ENCODE measurements at regions of chr1 and their contacts with region 1.

Region 1: GRCh38 chr1:161921990-161922389 is 101.7 kb downstream of the OLFML2B start:
- DNase-seq: no peak
- H3K4me3 ChIP-seq: no peak overlapping the region
- H3K27ac ChIP-seq: no peak overlapping the region
- H3K4me1 ChIP-seq: no peaks in the 10 kb centered on the region
- H3K27me3 ChIP-seq: no peaks in the 10 kb centered on the region
- CTCF ChIP-seq: no peak
- POLR2A ChIP-seq: no peak

Region 2: DNA sequence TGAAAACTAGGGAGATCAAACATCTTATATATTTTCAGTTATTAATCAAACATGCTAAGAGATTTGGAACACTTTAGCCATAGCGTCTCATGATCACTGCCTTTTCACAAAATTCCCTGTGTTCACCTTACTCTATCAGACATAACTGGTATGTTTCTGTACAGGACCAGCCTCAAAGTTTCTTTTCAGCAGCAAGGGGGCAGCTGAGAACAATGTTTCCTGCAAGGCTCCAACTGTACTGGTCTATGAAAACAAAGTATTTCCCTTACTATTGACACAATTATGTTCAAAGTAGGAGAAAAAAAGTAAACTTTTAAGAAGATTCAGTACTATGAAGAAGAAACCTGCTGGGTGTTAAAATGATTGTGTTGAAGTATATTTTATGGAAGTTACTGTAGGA is 57.4 kb before region 1 on chr1:
- intact Hi-C with region 1: no loop called
- DNase-seq: no peak
- H3K4me3 ChIP-seq: no peak overlapping the region
- H3K27ac ChIP-seq: no peak overlapping the region
- H3K4me1 ChIP-seq: no peaks in the 10 kb centered on the region
- H3K27me3 ChIP-seq: no peaks in the 10 kb centered on the region
- CTCF ChIP-seq: peak in 1 of 4 experiments; percentile 26
- POLR2A ChIP-seq: no peak

Region 3: GRCh38 chr1:161989108-161989507 is 67.1 kb after region 1 on chr1:
- intact Hi-C with region 1: loop called (anchors 2 kb)
- DNase-seq: no peak
- H3K4me3 ChIP-seq: no peak overlapping the region
- H3K27ac ChIP-seq: no peak overlapping the region
- H3K4me1 ChIP-seq: no peaks in the 10 kb centered on the region
- H3K27me3 ChIP-seq: no peaks in the 10 kb centered on the region
- CTCF ChIP-seq: no peak
- POLR2A ChIP-seq: no peak

Region 4: DNA sequence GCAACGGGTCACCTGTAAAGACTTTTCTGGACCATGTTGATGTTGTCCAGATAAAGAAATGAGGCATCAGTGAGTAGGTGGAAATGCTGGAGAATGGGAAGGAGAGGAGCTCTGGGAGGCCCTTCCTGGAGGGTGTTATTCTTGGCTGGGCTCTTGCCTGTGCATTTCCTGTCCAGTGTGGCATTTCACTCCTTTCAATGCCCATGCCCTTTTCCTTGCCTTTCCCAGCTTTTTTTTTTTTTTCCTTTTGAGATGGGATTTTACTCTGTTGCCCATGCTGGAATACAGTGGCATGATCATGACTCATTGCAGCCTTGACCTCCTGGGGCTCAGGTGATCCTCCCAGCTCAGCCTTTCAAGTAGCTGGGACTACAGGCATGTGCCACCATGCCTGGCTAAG is 159.3 kb after region 1 on chr1:
- intact Hi-C with region 1: no loop called
- DNase-seq: no peak
- H3K4me3 ChIP-seq: no peak overlapping the region
- H3K27ac ChIP-seq: no peak overlapping the region
- H3K4me1 ChIP-seq: no peaks in the 10 kb centered on the region
- H3K27me3 ChIP-seq: no peaks in the 10 kb centered on the region
- CTCF ChIP-seq: no peak
- POLR2A ChIP-seq: no peak